Mammary epithelial cell (primary cell): ENCODE measurements at regions of chr5 and their contacts with region 1.

Region 1: DNA sequence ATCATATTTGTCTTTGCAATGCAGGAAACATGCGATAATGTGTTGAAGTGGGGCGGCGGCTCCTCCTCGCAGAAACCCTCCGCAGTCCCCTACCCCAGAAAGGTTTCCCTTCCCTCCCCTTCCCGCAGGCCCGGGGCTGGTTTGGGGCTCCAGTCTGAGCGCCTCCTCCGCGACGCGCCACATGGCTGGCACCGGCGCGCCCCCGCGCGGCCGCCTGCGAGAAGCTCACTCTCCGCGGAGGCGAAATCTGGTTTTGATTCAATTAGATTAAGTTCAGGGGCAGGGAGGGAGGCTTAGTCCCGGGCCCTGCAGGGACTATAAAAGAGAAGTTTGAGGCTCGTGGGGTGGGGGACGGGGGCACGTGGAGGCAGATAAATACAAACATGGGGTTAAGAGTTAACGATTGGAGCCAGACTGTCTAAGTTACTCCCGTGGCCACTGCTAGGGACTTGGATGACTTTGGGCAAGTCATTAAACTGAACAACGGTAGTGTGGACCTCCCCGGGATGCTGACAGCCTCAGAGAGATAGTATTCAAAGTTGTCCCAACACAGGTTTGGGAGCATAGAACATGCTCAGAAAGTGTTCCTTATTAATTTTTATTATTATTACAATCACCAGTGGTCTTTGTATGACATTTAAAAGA is 69.4 kb downstream of the MSX2 start:
- DNase-seq: peak; percentile 36
- H3K4me3 ChIP-seq: no peak overlapping the region
- H3K27ac ChIP-seq: no peak overlapping the region
- H3K4me1 ChIP-seq: no peaks in the 10 kb centered on the region
- H3K27me3 ChIP-seq: no peaks in the 10 kb centered on the region
- CTCF ChIP-seq: peak; percentile 68 to 95

Region 2: GRCh38 chr5:174327317-174328236 is 466.2 kb before region 1 on chr5:
- CTCF ChIA-PET with region 1: interaction called, 4 read pairs
- dilution Hi-C with region 1: no loop called
- in situ Hi-C with region 1: no loop called
- intact Hi-C with region 1: loop called (anchors 1 kb)
- DNase-seq: peak; percentile 56
- H3K4me3 ChIP-seq: no peak overlapping the region
- H3K27ac ChIP-seq: no peak overlapping the region
- H3K4me1 ChIP-seq: no peaks in the 10 kb centered on the region
- H3K27me3 ChIP-seq: no peaks in the 10 kb centered on the region
- CTCF ChIP-seq: peak; percentile 85 to 90

Region 3: GRCh38 chr5:174503461-174504265 is 290.1 kb before region 1 on chr5:
- CTCF ChIA-PET with region 1: no interaction called
- dilution Hi-C with region 1: no loop called
- in situ Hi-C with region 1: no loop called
- intact Hi-C with region 1: no loop called
- DNase-seq: peak; percentile 84
- H3K4me3 ChIP-seq: peak overlapping the region in 1 of 3 experiments; percentile 18
- H3K27ac ChIP-seq: no peak overlapping the region
- H3K4me1 ChIP-seq: peaks cover 13% of the 10 kb centered on the region
- H3K27me3 ChIP-seq: no peaks in the 10 kb centered on the region
- CTCF ChIP-seq: no peak

Region 4: DNA sequence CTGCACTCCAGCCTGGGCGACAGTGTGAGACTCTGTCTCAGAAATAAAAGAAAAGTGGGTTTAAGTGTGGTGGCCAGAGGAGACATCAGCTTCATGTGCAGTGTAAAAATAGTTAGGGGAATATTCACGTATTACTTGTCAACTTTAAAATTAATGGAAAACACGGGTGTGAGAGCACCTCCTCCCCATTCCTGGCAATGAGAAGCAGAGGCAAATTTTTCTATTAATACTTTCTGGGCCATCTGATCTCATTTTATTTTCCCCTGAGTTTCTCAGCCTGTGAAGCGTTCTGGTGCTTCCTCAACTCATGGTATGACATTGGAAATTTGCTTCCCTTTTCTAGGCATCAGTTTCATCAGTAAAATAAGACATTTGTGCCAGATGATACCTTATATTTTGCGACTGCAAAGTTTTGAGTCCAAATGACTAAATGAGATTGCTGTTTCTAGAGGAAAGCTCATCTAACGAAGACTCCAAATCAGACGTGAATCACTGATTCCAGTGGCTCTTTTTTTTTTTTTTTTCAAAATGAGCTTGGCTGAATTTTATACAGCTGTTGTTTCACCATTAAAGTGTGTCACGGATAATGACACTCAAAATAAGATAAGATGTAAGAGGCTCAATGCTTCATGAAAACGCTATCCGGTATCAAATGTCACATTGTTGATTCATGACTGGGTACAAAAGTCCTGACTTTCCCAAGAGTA is 35.2 kb after region 1 on chr5:
- CTCF ChIA-PET with region 1: no interaction called
- dilution Hi-C with region 1: no loop called
- in situ Hi-C with region 1: no loop called
- intact Hi-C with region 1: no loop called
- DNase-seq: no peak
- H3K4me3 ChIP-seq: no peak overlapping the region
- H3K27ac ChIP-seq: no peak overlapping the region
- H3K4me1 ChIP-seq: no peaks in the 10 kb centered on the region
- H3K27me3 ChIP-seq: no peaks in the 10 kb centered on the region
- CTCF ChIP-seq: no peak